ENCODE measurements at regions of chr1 and their contacts with region 1.

Region 1: GRCh38 chr1:234730770-234731568 is 121.0 kb upstream of the IRF2BP2 start:
- DNase-seq: no peak

Region 2: DNA sequence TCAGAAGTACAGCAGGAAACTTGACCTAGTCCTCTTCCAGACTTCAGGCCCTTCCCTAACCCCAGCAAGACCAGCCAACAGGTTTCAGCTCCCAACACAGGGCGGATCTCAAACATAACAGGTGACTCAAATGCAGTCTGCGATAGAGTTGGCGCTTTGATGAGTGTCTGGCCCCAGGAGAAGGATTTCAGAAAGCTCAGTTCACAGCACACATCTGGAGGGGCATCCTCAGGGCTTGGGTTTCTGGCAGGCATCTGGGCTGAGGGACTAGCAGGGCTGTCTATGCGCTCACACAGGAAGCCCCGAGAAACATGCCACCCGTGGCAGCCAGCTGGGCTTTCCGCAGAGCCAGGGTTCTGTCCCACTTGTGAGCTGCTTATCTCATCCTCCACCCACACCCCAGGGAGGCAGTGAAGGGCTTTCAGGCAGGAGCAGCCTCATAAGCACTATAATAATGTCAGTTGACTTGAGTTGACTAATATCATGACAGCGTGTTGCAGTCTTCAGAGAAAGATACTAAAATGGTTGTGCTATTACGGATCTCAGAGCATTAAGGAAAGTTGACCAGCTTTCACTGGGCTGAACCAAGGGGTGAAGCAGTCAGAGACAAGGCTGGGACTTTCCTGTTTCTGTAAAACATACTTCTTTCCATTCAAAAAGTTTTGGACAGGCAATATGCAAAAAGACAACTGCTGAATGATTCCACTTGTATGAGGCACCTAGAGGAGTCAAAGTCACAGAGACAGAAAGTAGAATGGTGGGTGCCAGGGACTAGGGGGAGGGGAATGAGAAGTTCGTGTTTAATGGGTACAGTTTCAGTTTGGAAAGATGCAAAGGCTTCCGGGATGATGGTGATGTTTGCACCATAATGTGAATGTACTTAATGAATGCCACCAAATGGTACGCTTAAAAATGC is 112.0 kb after region 1 on chr1:
- in situ Hi-C with region 1: loop called (anchors 25 kb)
- DNase-seq: no peak

Region 3: DNA sequence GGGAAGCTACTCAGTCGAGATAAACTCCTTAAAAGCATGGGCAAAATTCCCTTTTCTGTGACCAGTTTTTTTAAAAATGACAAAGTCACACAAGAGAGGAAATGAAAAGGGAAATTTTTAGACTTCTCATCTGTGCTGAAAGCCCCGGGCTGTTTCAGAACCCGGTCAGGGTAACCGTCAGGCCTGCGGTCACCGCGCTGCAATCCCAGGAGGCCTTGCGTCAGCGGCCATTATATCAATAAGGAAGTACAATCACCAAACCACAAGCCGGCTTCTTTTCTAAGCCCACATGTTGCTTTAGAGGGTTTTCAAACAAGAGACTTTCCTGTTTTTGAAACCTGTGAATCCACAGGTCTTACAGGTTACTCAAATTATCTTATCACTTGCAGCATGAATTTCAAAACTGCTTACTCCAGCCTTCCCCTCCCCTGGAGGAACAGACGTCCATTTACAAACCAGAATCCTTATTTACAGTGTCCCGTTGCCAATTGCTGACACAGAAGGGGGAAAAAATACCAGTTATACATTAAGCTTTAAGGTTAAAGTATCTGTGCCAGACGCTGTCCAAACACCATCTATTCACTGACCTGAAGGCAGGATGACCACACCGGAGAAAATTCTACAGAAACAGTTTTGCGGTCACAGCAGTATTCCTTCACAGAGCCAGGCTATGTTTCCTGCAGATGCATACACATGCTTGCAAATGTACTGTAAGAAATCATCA is 232.4 kb after region 1 on chr1:
- in situ Hi-C with region 1: loop called (anchors 25 kb)
- DNase-seq: peak; percentile 97

Region 4: DNA sequence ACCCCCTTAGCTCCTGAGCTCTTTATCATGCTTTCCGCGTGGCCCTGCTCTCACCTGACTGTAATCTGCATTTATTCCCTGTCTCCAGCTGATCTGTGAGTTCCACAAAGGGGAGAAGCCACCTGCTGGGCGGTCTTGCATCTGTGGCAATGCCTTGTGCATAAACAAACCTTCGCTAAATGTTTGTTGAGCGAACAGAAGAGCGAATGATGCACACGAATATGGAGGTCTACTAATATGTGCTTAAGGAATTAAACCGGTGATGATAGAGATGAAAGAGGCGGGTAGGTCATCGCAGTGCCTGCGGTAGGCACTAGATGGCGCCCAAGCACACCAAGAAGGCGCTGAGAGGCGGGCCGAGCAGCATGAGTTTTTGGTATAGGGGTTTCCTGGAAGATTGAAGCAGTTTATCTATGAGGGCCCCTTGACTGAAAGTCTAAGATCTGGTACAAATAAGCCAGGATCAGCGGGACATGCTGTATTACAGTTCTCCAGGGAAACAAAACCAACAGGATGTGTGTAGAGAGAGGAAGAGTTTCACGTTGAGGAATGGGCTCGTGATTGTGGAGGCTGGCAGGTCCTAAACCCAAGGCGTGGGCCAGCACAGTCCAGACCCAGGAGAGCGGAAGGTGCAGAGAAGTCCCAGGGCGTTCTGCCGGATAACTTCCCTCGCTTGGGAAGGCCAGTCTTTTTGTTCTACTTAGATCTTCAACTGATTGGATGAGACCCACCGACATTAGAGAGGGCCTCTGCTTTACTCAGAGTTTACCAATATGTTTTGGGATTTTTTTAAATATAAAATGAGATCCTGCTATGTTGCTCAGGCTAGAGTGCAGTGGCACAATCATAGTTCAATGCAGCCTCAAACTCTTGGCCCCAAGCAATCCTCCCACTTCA is 363.0 kb after region 1 on chr1:
- in situ Hi-C with region 1: loop called (anchors 25 kb)
- DNase-seq: peak; percentile 89

Measured in KBM-7 (cell line).